CD14-positive monocyte (primary cell): ENCODE measurements at regions of chr11 and their contacts with region 1.

Region 1: DNA sequence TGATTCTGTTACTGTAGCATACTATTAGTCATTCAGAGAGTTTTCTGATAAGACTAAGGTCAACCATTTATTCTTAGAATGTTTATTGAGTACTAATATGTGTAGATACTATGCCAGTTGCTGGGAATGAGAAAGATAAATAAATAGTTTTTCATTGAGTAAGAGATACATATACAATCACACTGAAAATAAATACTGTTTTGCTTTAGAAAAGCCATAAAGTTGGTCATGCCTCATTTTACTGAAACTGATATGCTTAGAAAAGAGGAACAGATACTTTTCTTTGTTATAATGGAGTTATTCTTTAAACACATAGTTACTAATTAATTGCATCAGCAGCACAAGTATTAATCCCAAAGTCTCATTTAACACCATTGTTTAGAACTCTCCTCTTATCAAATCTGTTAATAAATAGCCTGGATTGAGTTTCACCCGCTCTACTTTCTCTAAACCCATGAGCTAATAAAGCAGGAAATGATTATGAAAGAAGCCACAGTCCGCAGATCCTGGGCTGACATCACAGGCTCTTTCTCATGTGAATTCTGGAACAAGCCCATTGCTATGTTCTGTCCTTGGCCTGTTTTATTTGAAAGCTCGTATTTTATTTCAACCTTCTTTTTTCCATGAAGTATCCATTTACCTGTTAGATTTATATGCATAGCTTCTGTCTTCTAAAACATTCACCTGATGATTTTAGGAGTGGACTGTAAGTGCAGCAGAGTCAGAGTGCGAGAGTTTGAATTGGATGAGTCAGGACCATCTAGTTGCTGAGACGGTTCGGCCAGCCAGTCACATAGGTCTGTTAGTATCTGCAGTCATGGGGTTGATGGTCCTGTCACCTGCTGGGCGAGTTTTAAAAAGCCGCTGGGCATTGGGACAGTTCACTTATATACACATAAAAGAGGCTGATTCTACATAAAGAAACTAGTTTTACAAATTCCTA is 35.5 kb downstream of the PIWIL4 start:
- DNase-seq: peak; percentile 80 to 96 (median 93)
- H3K4me3 ChIP-seq: peak overlapping the region in 2 of 3 experiments; percentile 27 to 56
- H3K4me3 Mint-ChIP-seq: peak overlapping the region; percentile 32 to 84
- H3K27ac ChIP-seq: peak overlapping the region; percentile 79 to 83
- H3K27ac Mint-ChIP-seq: peak overlapping the region; percentile 88 to 97 (median 94)
- H3K4me1 ChIP-seq: peaks cover 13 to 21% of the 10 kb centered on the region in 2 donors
- H3K4me1 Mint-ChIP-seq: peaks cover 16% of the 10 kb centered on the region
- H3K27me3 ChIP-seq: no peaks in the 10 kb centered on the region
- H3K27me3 Mint-ChIP-seq: no peaks in the 10 kb centered on the region
- CTCF ChIP-seq: no peak

Region 2: GRCh38 chr11:94519478-94520084 is 83.1 kb before region 1 on chr11:
- intact Hi-C with region 1: loop called (anchors 2 to 5 kb)
- DNase-seq: peak; percentile 21 to 61 (median 43)
- H3K4me3 ChIP-seq: peak overlapping the region in 2 of 3 experiments; percentile 19 to 43
- H3K4me3 Mint-ChIP-seq: no peak overlapping the region
- H3K27ac ChIP-seq: no peak overlapping the region
- H3K27ac Mint-ChIP-seq: no peak overlapping the region
- H3K4me1 ChIP-seq: peaks cover 4 to 9% of the 10 kb centered on the region in 2 donors
- H3K4me1 Mint-ChIP-seq: peaks cover 4% of the 10 kb centered on the region
- H3K27me3 ChIP-seq: no peaks in the 10 kb centered on the region
- H3K27me3 Mint-ChIP-seq: peaks cover 0 to 2% (median 1%) of the 10 kb centered on the region in 3 donors
- CTCF ChIP-seq: peak; percentile 74

Region 3: GRCh38 chr11:94563176-94563847 is 39.4 kb before region 1 on chr11:
- intact Hi-C with region 1: no loop called
- DNase-seq: peak in 1 of 3 donors; percentile 40
- H3K4me3 ChIP-seq: no peak overlapping the region
- H3K4me3 Mint-ChIP-seq: no peak overlapping the region
- H3K27ac ChIP-seq: no peak overlapping the region
- H3K27ac Mint-ChIP-seq: peak overlapping the region in 3 of 7 donors; percentile 1 to 71 (median 33)
- H3K4me1 ChIP-seq: peaks cover 31 to 43% of the 10 kb centered on the region in 2 donors
- H3K4me1 Mint-ChIP-seq: peaks cover 51% of the 10 kb centered on the region
- H3K27me3 ChIP-seq: no peaks in the 10 kb centered on the region
- H3K27me3 Mint-ChIP-seq: no peaks in the 10 kb centered on the region
- CTCF ChIP-seq: peak; percentile 24

Region 4: GRCh38 chr11:94925422-94926270 is 322.9 kb after region 1 on chr11:
- intact Hi-C with region 1: no loop called
- DNase-seq: no peak
- H3K4me3 ChIP-seq: no peak overlapping the region
- H3K4me3 Mint-ChIP-seq: no peak overlapping the region
- H3K27ac ChIP-seq: no peak overlapping the region
- H3K27ac Mint-ChIP-seq: no peak overlapping the region
- H3K4me1 ChIP-seq: peaks cover 11 to 13% of the 10 kb centered on the region in 2 donors
- H3K4me1 Mint-ChIP-seq: peaks cover 37% of the 10 kb centered on the region
- H3K27me3 ChIP-seq: no peaks in the 10 kb centered on the region
- H3K27me3 Mint-ChIP-seq: peaks cover 0 to 3% (median 2%) of the 10 kb centered on the region in 3 donors
- CTCF ChIP-seq: no peak